ENCODE measurements at regions of chr3 and their contacts with region 1.

Region 1: GRCh38 chr3:14431892-14432834 is 29.8 kb downstream of the SLC6A6 start:
- DNase-seq: peak; percentile 91
- H3K4me3 Mint-ChIP-seq: peak overlapping the region; percentile 73
- H3K27ac Mint-ChIP-seq: peak overlapping the region; percentile 93
- H3K4me1 Mint-ChIP-seq: peaks cover 72% of the 10 kb centered on the region
- H3K27me3 Mint-ChIP-seq: no peaks in the 10 kb centered on the region

Region 2: DNA sequence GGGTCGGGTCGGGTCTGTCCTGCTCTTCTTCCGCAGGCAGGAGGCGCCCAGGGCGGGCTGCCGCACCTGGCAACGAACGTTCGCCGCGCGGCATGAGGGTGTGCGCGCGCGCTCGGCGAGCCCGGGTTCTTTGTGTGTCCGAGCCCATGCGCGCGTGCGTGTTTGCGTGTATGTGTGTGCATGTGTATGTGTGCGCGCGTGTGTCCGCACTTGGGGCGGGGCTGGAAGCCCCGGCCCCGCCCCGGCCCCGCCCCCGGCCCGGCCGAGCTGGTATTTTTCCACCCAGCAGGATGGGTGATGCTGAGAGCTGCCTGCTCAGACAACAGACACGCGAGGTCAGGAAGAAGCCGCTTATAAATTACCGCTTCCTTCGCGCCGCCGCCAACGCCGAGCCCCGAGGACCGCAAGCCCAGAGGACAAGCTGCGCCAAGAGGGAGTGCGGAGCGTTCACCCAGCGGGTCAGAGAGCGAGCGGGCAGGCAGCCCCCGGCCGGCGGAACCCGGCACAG is 29.8 kb before region 1 on chr3 and contains the start of gene SLC6A6:
- intact Hi-C with region 1: loop called (anchors 1 kb)
- DNase-seq: peak; percentile 91
- H3K4me3 Mint-ChIP-seq: peak within 1 kb of the TSS; percentile 93
- H3K27ac Mint-ChIP-seq: peak within 1 kb of the TSS; percentile 95
- H3K4me1 Mint-ChIP-seq: peaks cover 35% of the 10 kb centered on the region
- H3K27me3 Mint-ChIP-seq: no peaks in the 10 kb centered on the region
- total RNA-seq, gene SLC6A6: 55.1 and 55.8 TPM in 2 replicates

Region 3: GRCh38 chr3:14410503-14411165 is 21.5 kb before region 1 on chr3:
- intact Hi-C with region 1: loop called (anchors 2 kb)
- DNase-seq: peak; percentile 31
- H3K4me3 Mint-ChIP-seq: peak overlapping the region; percentile 55
- H3K27ac Mint-ChIP-seq: peak overlapping the region; percentile 95
- H3K4me1 Mint-ChIP-seq: peaks cover 45% of the 10 kb centered on the region
- H3K27me3 Mint-ChIP-seq: no peaks in the 10 kb centered on the region

Region 4: DNA sequence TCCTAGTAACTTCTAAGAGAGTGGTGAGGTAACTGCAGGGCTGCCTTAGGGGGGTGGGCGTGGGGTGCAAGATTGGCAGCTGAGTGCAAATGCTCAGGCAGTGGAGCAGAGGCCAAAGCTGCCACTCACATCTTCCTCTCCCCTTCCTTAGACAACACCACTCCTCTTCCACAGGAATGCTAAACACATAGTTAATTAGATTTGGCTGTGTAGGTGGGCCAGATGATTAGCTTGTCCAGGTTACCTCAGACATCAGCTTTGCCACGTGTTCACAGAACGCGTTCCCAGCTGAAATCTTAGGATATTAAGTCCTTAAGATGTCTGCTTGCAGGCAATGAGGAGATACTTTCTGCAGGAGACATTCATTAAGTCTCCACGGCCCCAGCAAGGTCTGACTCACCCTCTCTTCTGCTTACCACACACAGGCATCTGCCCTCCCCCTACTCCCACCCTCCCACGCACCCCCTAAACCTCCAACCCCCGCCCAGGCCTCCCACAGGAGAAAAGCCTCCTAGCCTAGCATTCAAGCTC is 194.8 kb after region 1 on chr3:
- intact Hi-C with region 1: no loop called
- DNase-seq: no peak
- H3K4me3 Mint-ChIP-seq: no peak overlapping the region
- H3K27ac Mint-ChIP-seq: no peak overlapping the region
- H3K4me1 Mint-ChIP-seq: no peaks in the 10 kb centered on the region
- H3K27me3 Mint-ChIP-seq: no peaks in the 10 kb centered on the region

Region 5: GRCh38 chr3:14651440-14652251 is 219.5 kb after region 1 on chr3 and contains the start of gene CCDC174:
- intact Hi-C with region 1: loop called (anchors 2 kb)
- DNase-seq: peak; percentile 94
- H3K4me3 Mint-ChIP-seq: peak within 1 kb of the TSS; percentile 92
- H3K27ac Mint-ChIP-seq: peak within 1 kb of the TSS; percentile 95
- H3K4me1 Mint-ChIP-seq: peaks cover 30% of the 10 kb centered on the region
- H3K27me3 Mint-ChIP-seq: no peaks in the 10 kb centered on the region
- total RNA-seq, gene CCDC174: 15.0 and 18.8 TPM in 2 replicates

Measured in activated T-helper 2 cell treated with anti-CD3 and anti-CD28 coated beads, Interferon-gamma antibody, Interleukin-2, Interleukin-4, amounts not matched to agents 10 μg/mL and 5 μg/mL and 100 μg/mL, durations not matched to agents 14 hours and 24 hours and 36 hours (primary cell).